ENCODE measurements at regions of chr12 and their contacts with region 1.

Region 1: DNA sequence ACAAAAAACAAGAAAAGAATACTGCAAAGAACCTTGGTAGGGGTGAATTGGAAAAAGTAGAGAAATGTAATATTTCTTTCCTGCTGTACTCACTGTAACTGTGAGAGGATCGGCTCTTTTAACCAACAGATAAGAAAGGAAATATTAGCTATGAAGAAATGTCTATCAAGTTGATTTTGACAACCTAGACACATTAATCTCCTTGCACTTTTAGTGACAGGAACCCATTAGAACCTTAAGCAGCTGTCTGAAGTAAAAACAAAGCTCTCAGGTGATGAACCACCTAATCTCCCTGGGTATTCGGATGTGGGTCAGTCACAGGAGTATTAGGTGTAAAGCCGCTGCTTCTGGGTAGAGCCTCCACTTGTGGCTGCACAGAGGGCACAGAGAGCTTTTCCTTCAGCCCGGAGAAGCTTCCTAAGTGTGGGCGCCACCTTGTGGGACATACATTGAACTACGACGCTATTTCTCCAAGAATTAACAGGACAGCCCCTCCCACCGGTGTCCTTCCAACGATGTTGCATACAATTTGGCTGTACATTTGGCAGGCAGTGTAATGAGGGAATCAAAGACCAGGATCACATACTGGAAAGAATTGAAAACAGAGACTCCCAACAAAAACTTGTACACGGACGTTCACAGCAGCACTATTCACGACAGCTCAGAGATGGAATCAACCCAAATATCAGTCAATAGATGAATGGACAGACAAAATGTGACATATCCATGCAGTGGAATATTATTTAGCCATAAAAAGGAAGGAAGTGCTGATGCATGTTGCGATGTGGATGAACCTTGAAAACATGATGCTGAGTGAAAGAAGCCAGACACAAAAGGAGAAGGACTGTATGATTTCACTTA is 28.9 kb upstream of the MAPKAPK5 start:
- DNase-seq: peak; percentile 84
- ATAC-seq: peak; percentile 95
- H3K4me3 ChIP-seq: no peak overlapping the region
- H3K4me3 Mint-ChIP-seq: no peak overlapping the region
- H3K27ac ChIP-seq: no peak overlapping the region
- H3K27ac Mint-ChIP-seq: no peak overlapping the region
- H3K4me1 ChIP-seq: peaks cover 0 to 3% of the 10 kb centered on the region in 2 donors
- H3K4me1 Mint-ChIP-seq: peaks cover 7% of the 10 kb centered on the region
- H3K27me3 ChIP-seq: no peaks in the 10 kb centered on the region
- H3K27me3 Mint-ChIP-seq: peaks cover 4% of the 10 kb centered on the region
- CTCF ChIP-seq: peak; percentile 85

Region 2: DNA sequence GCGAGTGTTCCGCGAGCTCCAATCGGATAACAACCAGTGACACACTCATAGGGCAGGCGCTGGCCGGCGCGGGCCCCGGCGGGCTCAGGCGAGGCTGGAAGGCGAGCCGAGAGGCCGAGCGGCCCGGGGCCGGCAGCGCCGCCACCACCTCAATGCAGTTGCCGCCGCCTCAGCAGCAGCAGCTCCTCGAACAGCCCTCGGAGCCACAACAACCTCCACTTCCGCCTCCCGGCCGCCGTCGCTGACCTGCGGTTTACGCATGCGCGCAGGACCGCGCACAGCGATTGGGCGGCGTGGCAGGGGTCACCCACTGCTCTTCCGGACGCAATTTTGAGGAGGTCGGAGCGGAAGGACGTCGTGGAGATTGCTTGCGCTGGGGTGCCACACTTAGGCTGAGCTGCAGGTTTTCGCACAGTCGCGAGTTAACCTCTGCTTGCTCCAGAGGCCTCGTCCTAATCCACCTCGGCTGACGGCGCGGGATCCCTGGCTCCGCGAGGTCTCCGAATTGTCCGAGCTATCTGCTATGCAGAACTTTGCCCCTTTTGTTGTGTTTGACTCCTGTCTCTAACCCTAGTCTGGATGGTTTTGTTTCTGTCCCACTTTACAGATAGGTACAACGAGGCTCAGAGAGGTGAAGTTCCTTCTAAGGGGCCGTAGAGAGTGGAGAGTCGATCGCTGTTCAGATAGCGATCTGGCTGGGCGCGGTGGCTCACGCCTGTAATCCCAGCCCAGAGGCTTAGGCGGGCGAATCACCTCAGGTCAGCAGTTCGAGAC is 127.2 kb before region 1 on chr12 and contains the starts of genes ACAD10 and BRAP:
- CTCF ChIA-PET with region 1: interaction called, 17 read pairs
- POLR2A ChIA-PET with region 1: no interaction called
- intact Hi-C with region 1: loop called (anchors 1 kb)
- DNase-seq: peak; percentile 97
- ATAC-seq: peak; percentile 95
- H3K4me3 ChIP-seq: peak within 1 kb of the TSS; percentile 76 to 96 (median 95)
- H3K4me3 Mint-ChIP-seq: peak within 1 kb of the TSS; percentile 96
- H3K27ac ChIP-seq: peak within 1 kb of the TSS; percentile 61 to 80
- H3K27ac Mint-ChIP-seq: peak within 1 kb of the TSS; percentile 97
- H3K4me1 ChIP-seq: peaks cover 23 to 24% of the 10 kb centered on the region in 2 donors
- H3K4me1 Mint-ChIP-seq: peaks cover 31% of the 10 kb centered on the region
- H3K27me3 ChIP-seq: no peaks in the 10 kb centered on the region
- H3K27me3 Mint-ChIP-seq: no peaks in the 10 kb centered on the region
- CTCF ChIP-seq: no peak
- total RNA-seq, gene ACAD10: 48.6 and 55.3 TPM in 2 replicates
- total RNA-seq, gene BRAP: 25.3 and 25.7 TPM in 2 replicates

Region 3: DNA sequence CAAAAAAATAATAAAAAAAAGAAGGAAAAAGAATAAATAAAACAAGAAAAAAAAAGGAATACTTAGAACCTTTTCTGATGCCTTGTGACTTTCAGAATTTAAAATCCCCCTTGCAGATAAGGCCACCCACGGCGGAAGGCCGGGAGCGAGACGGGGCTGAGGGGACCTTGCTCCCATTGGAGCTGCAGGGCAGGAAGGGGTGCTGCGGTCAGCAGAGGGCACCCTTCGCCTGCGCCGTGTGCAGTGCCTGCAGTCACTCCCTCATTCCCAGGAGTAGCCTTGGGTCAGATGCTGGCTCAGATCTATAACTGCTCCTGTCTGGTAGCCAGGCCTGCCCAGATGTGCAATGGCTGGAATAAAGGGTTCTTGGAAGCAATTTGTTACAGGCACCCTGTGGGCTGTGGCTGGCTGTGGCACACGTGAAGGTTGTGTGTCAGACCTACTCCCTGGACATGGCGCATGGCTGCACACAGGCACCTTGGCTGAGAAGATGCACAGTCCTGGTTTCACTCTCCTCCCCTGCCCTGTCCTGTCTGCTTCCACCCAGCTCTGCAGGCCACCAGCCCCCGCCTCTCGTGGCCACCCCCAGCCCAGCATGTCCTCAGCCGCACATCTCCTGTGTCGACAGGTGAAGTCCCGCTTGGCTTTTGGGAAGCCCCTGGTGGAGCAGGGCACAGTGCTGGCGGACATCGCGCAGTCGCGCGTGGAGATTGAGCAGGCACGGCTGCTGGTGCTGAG is 59.8 kb before region 1 on chr12:
- CTCF ChIA-PET with region 1: interaction called, 248 read pairs
- POLR2A ChIA-PET with region 1: interaction called, 4 read pairs
- intact Hi-C with region 1: loop called (anchors 1 kb)
- DNase-seq: peak; percentile 54
- ATAC-seq: peak; percentile 35
- H3K4me3 ChIP-seq: no peak overlapping the region
- H3K4me3 Mint-ChIP-seq: no peak overlapping the region
- H3K27ac ChIP-seq: no peak overlapping the region
- H3K27ac Mint-ChIP-seq: no peak overlapping the region
- H3K4me1 ChIP-seq: peaks cover 11% of the 10 kb centered on the region in 2 donors
- H3K4me1 Mint-ChIP-seq: peaks cover 13% of the 10 kb centered on the region
- H3K27me3 ChIP-seq: no peaks in the 10 kb centered on the region
- H3K27me3 Mint-ChIP-seq: no peaks in the 10 kb centered on the region
- CTCF ChIP-seq: peak; percentile 64

Region 4: DNA sequence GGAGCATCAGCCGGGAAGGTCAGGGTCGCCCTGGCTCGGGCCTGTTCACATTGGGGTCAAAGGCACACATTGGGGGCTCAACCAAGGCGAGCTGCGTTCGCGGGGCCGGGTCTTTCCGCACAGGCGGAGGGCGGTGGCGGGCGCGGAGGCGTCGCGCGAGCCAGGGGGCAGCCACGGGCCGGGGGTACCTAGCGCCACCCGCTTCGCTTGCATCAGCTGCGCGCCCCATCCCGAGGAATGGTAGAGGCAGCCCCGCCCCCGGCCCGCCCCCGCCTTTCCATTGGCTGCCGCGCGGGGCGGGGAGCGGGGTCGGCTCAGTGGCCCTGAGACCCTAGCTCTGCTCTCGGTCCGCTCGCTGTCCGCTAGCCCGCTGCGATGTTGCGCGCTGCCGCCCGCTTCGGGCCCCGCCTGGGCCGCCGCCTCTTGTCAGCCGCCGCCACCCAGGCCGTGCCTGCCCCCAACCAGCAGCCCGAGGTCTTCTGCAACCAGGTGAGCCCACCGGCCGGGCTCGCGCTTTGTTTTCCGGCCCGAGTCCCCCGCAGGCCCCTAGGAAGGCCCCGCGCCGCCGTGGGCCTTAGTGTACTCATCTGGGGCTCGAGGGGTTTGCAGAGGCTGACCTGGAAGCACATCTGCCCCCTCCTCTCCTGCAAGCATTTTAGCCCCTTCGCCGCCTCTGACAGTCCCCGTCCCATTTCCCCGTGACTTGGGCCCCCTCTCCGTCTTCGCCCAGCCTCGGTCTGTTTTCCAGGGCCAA is 46.3 kb before region 1 on chr12 and contains the start of gene ALDH2:
- CTCF ChIA-PET with region 1: interaction called, 41 read pairs
- POLR2A ChIA-PET with region 1: no interaction called
- intact Hi-C with region 1: no loop called
- DNase-seq: peak; percentile 68
- ATAC-seq: peak; percentile 79
- H3K4me3 ChIP-seq: peak within 1 kb of the TSS; percentile 2 to 74 (median 62)
- H3K4me3 Mint-ChIP-seq: peak within 1 kb of the TSS; percentile 78
- H3K27ac ChIP-seq: peak within 1 kb of the TSS in 1 of 2 donors; percentile 55
- H3K27ac Mint-ChIP-seq: peak within 1 kb of the TSS; percentile 71
- H3K4me1 ChIP-seq: peaks cover 47 to 53% of the 10 kb centered on the region in 2 donors
- H3K4me1 Mint-ChIP-seq: peaks cover 57% of the 10 kb centered on the region
- H3K27me3 ChIP-seq: no peaks in the 10 kb centered on the region
- H3K27me3 Mint-ChIP-seq: no peaks in the 10 kb centered on the region
- CTCF ChIP-seq: no peak
- total RNA-seq, gene ALDH2: 22.3 TPM in 2 replicates

Region 5: DNA sequence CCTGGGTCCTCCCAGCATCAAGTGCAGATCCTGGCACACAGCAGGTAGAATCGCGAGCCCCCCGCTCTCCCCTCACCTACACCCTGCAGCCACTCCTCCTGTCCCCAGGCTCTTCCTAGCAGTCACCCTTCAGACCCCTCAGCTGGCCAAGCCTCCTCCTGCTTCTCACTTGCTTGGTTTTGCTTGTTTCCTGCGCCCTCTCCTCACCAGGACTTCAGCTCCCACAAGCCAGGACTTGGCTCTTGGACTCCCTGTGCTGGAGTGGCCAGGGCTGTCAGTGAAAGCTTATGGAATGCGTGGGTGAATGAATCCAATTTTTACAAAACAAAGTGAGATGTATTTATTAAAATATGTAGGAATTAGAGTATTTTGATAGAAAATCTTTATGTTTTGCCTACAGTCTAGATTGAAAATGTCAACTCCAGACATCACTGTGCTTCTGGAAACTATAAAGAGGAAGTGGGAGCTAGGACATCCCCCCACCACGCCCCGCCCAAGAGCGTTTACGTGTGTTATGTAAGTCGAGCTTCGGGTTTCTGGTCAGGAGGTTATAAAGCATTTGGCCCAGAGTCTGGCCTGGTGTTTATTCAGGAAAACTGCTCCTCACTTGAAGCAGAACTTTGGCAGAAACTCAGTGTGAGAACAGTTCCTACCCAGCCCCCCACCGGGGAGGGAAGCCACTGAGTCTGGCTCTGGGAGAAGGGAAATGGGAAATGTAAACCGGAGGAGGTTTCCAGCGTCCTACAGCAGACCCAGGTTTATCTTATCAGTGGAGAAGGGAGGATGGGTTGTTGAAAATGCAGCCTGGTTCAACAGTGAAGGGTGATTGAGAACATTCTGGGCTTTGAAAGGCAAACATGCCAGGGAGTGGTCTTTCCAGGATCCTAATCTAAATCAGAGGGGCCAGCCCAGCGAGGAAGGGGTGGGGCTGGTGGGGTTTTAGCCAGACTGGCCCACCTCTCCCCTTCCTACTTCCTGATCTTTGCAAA is 37.6 kb before region 1 on chr12:
- CTCF ChIA-PET with region 1: interaction called, 13 read pairs
- POLR2A ChIA-PET with region 1: no interaction called
- intact Hi-C with region 1: loop called (anchors 1 kb)
- DNase-seq: peak; percentile 92
- ATAC-seq: peak; percentile 93
- H3K4me3 ChIP-seq: peak overlapping the region in 4 of 5 experiments; percentile 3 to 48 (median 26)
- H3K4me3 Mint-ChIP-seq: peak overlapping the region; percentile 80
- H3K27ac ChIP-seq: peak overlapping the region; percentile 94 to 97
- H3K27ac Mint-ChIP-seq: peak overlapping the region; percentile 98
- H3K4me1 ChIP-seq: peaks cover 31 to 32% of the 10 kb centered on the region in 2 donors
- H3K4me1 Mint-ChIP-seq: peaks cover 36% of the 10 kb centered on the region
- H3K27me3 ChIP-seq: no peaks in the 10 kb centered on the region
- H3K27me3 Mint-ChIP-seq: no peaks in the 10 kb centered on the region
- CTCF ChIP-seq: no peak

Region 6: DNA sequence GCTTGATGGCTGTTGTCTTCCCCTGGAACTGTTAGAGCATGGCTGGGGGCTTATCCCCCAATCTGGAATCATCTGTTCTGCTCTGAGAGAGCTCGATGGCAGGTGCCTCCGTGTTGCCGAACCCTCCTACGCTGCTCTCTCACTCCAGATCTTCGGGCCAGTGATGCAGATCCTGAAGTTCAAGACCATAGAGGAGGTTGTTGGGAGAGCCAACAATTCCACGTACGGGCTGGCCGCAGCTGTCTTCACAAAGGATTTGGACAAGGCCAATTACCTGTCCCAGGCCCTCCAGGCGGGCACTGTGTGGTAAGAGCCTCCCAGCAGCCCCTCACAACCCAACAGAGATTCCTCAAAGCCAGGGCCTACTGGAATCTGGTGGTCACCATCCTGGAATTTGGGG is 13.4 kb before region 1 on chr12:
- CTCF ChIA-PET with region 1: interaction called, 12 read pairs
- POLR2A ChIA-PET with region 1: interaction called, 3 read pairs
- intact Hi-C with region 1: no loop called
- DNase-seq: no peak
- ATAC-seq: no peak
- H3K4me3 ChIP-seq: no peak overlapping the region
- H3K4me3 Mint-ChIP-seq: no peak overlapping the region
- H3K27ac ChIP-seq: no peak overlapping the region
- H3K27ac Mint-ChIP-seq: no peak overlapping the region
- H3K4me1 ChIP-seq: no peaks in the 10 kb centered on the region
- H3K4me1 Mint-ChIP-seq: no peaks in the 10 kb centered on the region
- H3K27me3 ChIP-seq: no peaks in the 10 kb centered on the region
- H3K27me3 Mint-ChIP-seq: no peaks in the 10 kb centered on the region
- CTCF ChIP-seq: no peak

Region 7: GRCh38 chr12:111826316-111826715 is 13.2 kb after region 1 on chr12:
- CTCF ChIA-PET with region 1: interaction called, 10 read pairs
- POLR2A ChIA-PET with region 1: no interaction called
- intact Hi-C with region 1: no loop called
- DNase-seq: no peak
- ATAC-seq: no peak
- H3K4me3 ChIP-seq: no peak overlapping the region
- H3K4me3 Mint-ChIP-seq: no peak overlapping the region
- H3K27ac ChIP-seq: no peak overlapping the region
- H3K27ac Mint-ChIP-seq: no peak overlapping the region
- H3K4me1 ChIP-seq: no peaks in the 10 kb centered on the region
- H3K4me1 Mint-ChIP-seq: no peaks in the 10 kb centered on the region
- H3K27me3 ChIP-seq: no peaks in the 10 kb centered on the region
- H3K27me3 Mint-ChIP-seq: peaks cover 23% of the 10 kb centered on the region
- CTCF ChIP-seq: no peak

Measured in B cell (primary cell).